ENCODE measurements at regions of chr1 and their contacts with region 1.

Region 1: DNA sequence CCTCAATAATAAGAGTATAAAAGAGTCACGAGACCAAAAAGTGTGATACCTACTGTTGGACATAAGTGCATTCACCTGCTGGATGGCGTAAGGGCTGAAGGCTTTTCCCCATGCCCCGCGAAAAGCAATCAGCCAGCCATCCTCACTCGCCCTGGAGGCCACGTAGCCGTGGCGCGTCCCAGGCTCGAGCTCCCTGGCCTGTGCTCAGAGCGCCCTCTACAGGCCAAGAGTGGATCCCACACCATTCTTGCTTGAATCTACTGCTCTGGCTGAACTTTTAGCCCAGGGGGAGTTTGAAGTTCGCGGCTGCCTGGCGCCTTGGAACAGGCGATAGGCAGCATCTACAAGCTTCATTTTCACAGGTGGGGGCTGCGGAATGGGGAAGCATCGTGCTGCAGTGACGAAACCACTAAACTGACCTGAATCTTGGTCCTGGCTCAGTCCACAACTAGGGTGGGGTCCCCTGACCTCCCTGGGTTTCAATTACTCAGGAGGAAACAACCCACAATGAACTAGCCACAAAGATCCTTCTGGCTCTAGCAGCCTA is 70.3 kb upstream of the SERBP1 start:
- DNase-seq: peak; percentile 83 to 93
- ATAC-seq: peak; percentile 99 to 100 (median 100)
- H3K4me3 ChIP-seq: no peak overlapping the region
- H3K4me3 Mint-ChIP-seq: no peak overlapping the region
- H3K27ac ChIP-seq: no peak overlapping the region
- H3K27ac Mint-ChIP-seq: peak overlapping the region in 1 of 2 donors; percentile 68
- H3K4me1 ChIP-seq: peaks cover 6% of the 10 kb centered on the region
- H3K4me1 Mint-ChIP-seq: peaks cover 0 to 15% of the 10 kb centered on the region in 2 donors
- H3K27me3 ChIP-seq: no peaks in the 10 kb centered on the region
- H3K27me3 Mint-ChIP-seq: peaks cover 0 to 2% of the 10 kb centered on the region in 2 donors
- CTCF ChIP-seq: peak; percentile 96

Region 2: DNA sequence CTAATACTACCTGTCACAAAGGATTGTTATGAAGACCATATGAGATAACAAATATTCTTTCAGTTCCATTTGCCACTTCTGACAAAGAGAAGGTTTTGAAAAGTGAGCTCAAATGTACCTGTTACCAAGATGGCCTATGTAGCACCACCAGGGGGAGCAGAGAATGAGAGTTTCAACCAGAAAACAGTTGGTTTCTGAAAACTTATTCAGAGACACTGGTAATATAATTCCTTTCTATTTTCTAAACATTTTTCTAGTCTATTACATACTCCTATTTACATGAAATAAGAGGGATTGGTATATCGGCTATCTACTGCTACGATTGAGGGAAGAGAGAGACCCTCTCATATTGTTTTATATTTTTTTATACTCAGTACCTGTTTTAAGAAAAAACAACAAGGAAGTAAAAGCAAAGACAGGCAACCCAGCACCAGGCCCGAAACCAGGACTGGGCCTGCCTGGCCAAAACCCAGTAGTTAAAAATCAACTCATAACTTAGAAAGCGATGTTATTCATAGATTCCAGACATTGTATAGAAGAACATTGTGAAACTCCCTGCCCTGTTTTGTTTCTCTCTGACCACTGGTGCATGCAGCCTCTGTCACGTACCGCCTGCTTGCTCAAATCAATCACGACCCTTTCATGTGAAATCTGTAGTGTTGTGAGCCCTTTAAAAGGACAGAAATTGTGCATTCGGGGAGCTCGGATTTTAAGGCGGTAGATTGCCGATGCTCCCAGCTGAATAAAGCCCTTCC is 285.9 kb before region 1 on chr1:
- intact Hi-C with region 1: loop called (anchors 1 kb)
- DNase-seq: peak; percentile 22 to 70
- ATAC-seq: peak; percentile 59 to 77 (median 71)
- H3K4me3 ChIP-seq: no peak overlapping the region
- H3K4me3 Mint-ChIP-seq: no peak overlapping the region
- H3K27ac ChIP-seq: no peak overlapping the region
- H3K27ac Mint-ChIP-seq: peak overlapping the region; percentile 14 to 60
- H3K4me1 ChIP-seq: peaks cover 11% of the 10 kb centered on the region
- H3K4me1 Mint-ChIP-seq: peaks cover 15 to 25% of the 10 kb centered on the region in 2 donors
- H3K27me3 ChIP-seq: no peaks in the 10 kb centered on the region
- H3K27me3 Mint-ChIP-seq: no peaks in the 10 kb centered on the region
- CTCF ChIP-seq: peak; percentile 84

Region 3: DNA sequence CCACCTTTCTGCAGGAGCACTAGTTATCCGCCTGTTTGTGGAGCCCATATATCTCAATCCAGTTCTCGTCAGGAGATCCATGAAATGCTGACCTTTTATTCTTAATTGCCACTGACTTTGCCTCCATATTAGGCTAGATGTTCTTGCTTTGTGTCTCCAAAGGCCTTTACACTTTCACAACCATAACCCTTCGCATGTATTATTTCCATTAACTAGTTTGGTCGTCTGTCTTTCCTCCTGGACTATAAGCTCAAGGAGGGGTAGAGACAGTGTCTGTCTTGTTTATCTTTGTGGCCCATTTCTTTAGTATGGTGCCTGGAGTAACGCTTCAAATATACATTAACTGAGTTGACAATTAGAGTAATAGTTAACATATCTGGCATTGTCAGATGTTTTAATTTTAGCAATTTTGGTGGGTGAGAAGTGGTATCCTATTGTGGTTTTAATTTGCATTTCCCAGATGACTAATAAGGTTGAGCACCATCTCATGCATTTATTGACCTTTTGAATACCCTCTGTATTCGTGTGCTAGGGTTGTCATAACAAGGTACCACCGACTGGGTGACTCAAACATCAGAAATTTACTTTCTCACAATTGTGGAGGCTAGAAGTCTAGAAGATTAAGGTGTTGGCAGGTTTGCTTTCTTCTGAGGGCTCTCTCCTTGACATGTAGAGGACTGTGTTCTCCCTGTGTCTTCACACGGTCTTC is 214.6 kb before region 1 on chr1:
- intact Hi-C with region 1: loop called (anchors 1 kb)
- DNase-seq: peak in 1 of 2 donors; percentile 23
- ATAC-seq: peak; percentile 75 to 97 (median 96)
- H3K4me3 ChIP-seq: no peak overlapping the region
- H3K4me3 Mint-ChIP-seq: peak overlapping the region; percentile 14
- H3K27ac ChIP-seq: no peak overlapping the region
- H3K27ac Mint-ChIP-seq: peak overlapping the region; percentile 70 to 79
- H3K4me1 ChIP-seq: no peaks in the 10 kb centered on the region
- H3K4me1 Mint-ChIP-seq: peaks cover 22 to 33% of the 10 kb centered on the region in 2 donors
- H3K27me3 ChIP-seq: no peaks in the 10 kb centered on the region
- H3K27me3 Mint-ChIP-seq: no peaks in the 10 kb centered on the region
- CTCF ChIP-seq: peak; percentile 37

Region 4: DNA sequence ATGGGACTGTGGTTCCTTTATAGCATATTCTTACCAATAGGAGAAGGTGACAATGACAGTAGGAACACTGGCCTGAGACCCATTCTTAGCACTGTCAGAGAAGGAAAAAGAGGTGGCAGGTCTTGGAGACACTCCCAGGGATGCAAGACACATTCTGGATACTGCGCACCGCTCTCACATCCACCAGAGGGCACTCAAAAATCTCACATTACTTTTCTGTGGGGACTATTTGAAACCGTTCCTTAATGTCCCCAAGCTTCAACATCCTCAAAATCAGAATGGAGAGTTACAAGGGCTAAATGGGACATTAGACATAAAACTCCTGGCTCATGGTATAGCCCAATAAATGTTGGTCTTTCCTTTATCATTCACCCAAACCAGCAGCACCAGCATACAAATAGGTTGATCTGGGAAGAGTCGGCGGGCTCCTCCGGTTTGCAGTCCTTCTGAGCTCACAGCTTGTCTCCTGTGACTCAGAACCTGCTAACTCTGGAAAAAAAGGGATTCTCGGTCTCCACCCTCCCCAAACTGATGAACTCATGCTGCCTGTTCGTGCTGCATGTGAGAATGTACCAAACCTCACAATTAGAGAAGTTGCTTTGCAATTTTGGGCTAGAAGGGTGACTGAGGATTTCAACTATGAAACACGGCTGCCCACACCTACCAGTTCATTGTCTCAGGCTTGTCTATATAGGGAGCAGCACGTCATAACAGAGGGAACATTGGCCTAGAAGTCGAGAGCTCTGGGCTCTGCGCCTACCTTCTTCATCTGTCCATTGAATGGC is 152.6 kb before region 1 on chr1:
- intact Hi-C with region 1: loop called (anchors 5 kb)
- DNase-seq: peak in 1 of 2 donors; percentile 42
- ATAC-seq: peak in 2 of 3 donors; percentile 57 to 61
- H3K4me3 ChIP-seq: no peak overlapping the region
- H3K4me3 Mint-ChIP-seq: no peak overlapping the region
- H3K27ac ChIP-seq: no peak overlapping the region
- H3K27ac Mint-ChIP-seq: peak overlapping the region; percentile 63 to 72
- H3K4me1 ChIP-seq: peaks cover 3% of the 10 kb centered on the region
- H3K4me1 Mint-ChIP-seq: peaks cover 15 to 21% of the 10 kb centered on the region in 2 donors
- H3K27me3 ChIP-seq: no peaks in the 10 kb centered on the region
- H3K27me3 Mint-ChIP-seq: no peaks in the 10 kb centered on the region
- CTCF ChIP-seq: peak; percentile 43

Region 5: DNA sequence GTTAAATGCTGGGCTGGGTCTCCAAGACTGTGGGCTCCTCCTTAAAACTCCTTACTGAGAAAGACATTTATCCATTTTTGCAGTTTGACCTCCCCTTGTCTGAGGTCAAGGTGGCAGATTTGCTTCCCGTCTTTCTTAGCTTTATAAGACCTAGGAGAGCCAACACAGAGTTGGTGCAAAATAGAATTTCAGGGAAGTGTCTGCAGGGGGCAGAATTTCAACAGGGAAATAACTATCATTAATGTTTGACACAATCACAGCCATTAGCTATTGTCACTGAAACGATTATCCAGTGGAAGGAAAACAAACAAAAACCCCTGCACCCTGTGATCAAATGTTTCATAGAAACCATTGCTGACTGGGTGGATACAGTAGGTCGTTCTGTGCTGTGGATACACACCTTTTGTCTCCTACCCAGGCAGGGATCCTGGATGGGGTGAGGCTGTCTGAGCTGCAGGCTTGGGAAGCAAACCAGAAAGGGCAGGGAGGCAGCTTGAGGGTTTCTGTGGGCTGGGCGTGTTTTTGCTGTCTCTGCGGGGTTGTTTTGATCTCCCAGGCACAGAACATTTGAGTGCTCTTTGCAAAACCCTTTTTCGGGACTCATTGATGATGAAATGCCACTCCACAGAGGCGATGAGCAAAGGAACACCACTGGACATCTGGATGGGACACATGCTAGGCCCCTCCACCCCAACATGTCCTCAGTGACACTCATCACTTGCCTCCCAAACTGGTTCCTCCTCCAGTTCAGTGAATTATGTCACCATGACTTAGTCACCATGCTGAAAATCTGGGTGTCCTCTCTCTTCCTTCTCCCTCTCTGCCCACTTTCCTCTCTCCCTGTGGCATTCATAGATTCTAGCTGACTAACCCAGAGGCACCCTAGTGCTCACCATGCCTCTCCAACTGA is 23.9 kb after region 1 on chr1:
- intact Hi-C with region 1: no loop called
- DNase-seq: no peak
- ATAC-seq: no peak
- H3K4me3 ChIP-seq: no peak overlapping the region
- H3K4me3 Mint-ChIP-seq: no peak overlapping the region
- H3K27ac ChIP-seq: no peak overlapping the region
- H3K27ac Mint-ChIP-seq: no peak overlapping the region
- H3K4me1 ChIP-seq: no peaks in the 10 kb centered on the region
- H3K4me1 Mint-ChIP-seq: no peaks in the 10 kb centered on the region
- H3K27me3 ChIP-seq: no peaks in the 10 kb centered on the region
- H3K27me3 Mint-ChIP-seq: peaks cover 5 to 20% of the 10 kb centered on the region in 2 donors
- CTCF ChIP-seq: no peak